ENCODE measurements at regions of chrX and their contacts with region 1.

Region 1: DNA sequence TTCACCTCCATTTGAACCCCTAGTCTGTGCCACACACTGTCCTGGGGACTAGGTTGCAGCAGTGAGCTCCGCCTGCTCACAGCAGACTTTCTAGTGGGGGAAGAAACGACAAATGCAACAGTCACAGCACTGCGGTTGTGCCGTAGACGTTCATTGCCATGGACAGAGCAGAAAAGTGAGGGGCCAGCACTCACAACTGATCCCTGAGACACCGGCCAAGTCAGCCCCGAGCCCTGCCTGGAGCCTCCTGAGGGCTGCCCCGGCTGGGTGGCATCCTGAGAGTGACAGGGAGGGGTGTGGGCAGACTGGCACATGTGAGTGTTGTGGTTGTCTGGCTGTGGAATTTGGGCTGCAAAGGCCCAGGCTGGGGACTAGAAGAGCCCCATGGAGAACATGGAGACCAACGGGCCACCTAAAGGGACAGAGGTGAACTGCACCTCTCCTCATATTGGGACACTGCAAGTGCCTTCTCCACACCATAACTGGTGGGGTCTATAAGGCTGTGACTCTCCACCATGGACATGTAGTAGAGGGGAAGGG is 4.6 kb downstream of the DUSP9 start:
- DNase-seq: peak in 1 of 4 donors; percentile 11
- ATAC-seq: no peak
- H3K4me3 ChIP-seq: no peak overlapping the region
- H3K27ac ChIP-seq: no peak overlapping the region
- H3K4me1 ChIP-seq: peaks cover 7% of the 10 kb centered on the region
- H3K27me3 ChIP-seq: peaks cover 0 to 3% of the 10 kb centered on the region in 2 donors
- CTCF ChIP-seq: peak in 1 of 7 experiments; percentile 15
- POLR2A ChIP-seq: no peak

Region 2: GRCh38 chrX:153319295-153320046 is 332.1 kb before region 1 on chrX:
- intact Hi-C with region 1: no loop called
- DNase-seq: no peak
- ATAC-seq: no peak
- H3K4me3 ChIP-seq: no peak overlapping the region
- H3K27ac ChIP-seq: no peak overlapping the region
- H3K4me1 ChIP-seq: no peaks in the 10 kb centered on the region
- H3K27me3 ChIP-seq: no peaks in the 10 kb centered on the region
- CTCF ChIP-seq: no peak
- POLR2A ChIP-seq: no peak

Region 3: GRCh38 chrX:153554519-153555167 is 97.0 kb before region 1 on chrX:
- intact Hi-C with region 1: loop called (anchors 10 kb)
- DNase-seq: peak; percentile 65 to 73 (median 67)
- ATAC-seq: peak; percentile 75
- H3K4me3 ChIP-seq: no peak overlapping the region
- H3K27ac ChIP-seq: no peak overlapping the region
- H3K4me1 ChIP-seq: no peaks in the 10 kb centered on the region
- H3K27me3 ChIP-seq: no peaks in the 10 kb centered on the region
- CTCF ChIP-seq: peak; percentile 45 to 71 (median 59)
- POLR2A ChIP-seq: no peak

Region 4: GRCh38 chrX:153599192-153600031 is 52.2 kb before region 1 on chrX:
- intact Hi-C with region 1: no loop called
- DNase-seq: peak; percentile 90 to 94 (median 92)
- ATAC-seq: peak; percentile 98
- H3K4me3 ChIP-seq: peak overlapping the region in 1 of 2 donors; percentile 39
- H3K27ac ChIP-seq: peak overlapping the region in 3 of 4 donors; percentile 50 to 79 (median 75)
- H3K4me1 ChIP-seq: peaks cover 23% of the 10 kb centered on the region
- H3K27me3 ChIP-seq: no peaks in the 10 kb centered on the region
- CTCF ChIP-seq: peak in 1 of 7 experiments; percentile 14
- POLR2A ChIP-seq: peak in 2 of 3 donors; percentile 28 to 40

Region 5: DNA sequence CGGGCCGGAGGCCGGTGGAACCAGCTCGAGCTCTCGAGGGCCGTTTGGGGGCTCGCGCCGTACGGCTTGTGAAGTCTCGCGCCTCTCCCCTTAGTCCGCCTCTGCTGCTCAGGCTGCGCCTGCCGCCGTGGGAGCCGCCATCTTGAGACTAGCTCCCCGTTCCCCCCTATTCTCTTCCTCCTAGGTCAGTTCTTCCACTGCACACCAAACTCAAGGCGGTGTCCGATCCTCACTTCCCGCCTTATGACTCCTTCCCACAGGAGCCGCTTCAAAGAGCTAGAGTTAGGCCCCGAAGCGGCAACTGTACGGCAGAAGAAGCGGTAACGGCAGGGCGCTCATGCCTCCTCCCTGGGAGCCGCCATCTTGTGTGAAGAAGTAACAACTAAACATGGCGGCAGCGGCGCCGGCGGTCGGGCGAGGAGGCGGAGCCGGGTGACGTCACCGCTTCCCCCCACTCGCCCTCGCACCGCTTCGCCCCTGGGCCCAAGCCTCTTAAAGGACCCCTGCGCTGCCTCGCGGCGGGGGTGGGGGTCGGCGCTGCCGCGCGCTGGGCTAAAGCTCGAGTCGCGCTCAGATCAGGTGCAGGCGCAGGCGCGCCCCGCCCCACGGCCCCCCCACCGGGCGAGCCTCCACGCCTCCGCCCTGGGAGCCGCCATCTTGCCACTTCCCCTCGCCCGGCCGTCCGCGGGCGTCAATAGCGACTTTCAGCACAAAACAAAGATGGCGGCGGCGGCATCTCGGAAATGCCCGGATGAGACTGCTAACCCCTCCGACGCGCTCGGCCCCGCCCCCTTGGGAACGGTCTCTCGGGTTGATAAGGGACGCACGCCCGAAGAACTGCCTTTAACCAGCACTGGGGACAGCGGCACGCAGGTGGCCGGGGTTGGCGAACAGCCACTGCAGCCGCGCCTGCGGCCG is 320.1 kb after region 1 on chrX and contains the start of gene HCFC1:
- intact Hi-C with region 1: no loop called
- DNase-seq: peak; percentile 89 to 94 (median 92)
- ATAC-seq: peak; percentile 69
- H3K4me3 ChIP-seq: peak within 1 kb of the TSS; percentile 80 to 95
- H3K27ac ChIP-seq: peak within 1 kb of the TSS; percentile 94 to 99 (median 96)
- H3K4me1 ChIP-seq: peaks cover 45% of the 10 kb centered on the region
- H3K27me3 ChIP-seq: no peaks in the 10 kb centered on the region
- CTCF ChIP-seq: peak in 1 of 7 experiments; percentile 2
- POLR2A ChIP-seq: peak; percentile 33 to 79 (median 73)
- total RNA-seq, gene HCFC1: 16.6 to 62.6 TPM

Region 6: GRCh38 chrX:153984351-153985178 is 333.0 kb after region 1 on chrX:
- intact Hi-C with region 1: no loop called
- DNase-seq: peak in 3 of 4 donors; percentile 39 to 53 (median 50)
- ATAC-seq: no peak
- H3K4me3 ChIP-seq: no peak overlapping the region
- H3K27ac ChIP-seq: peak overlapping the region; percentile 46 to 83 (median 72)
- H3K4me1 ChIP-seq: peaks cover 35% of the 10 kb centered on the region
- H3K27me3 ChIP-seq: no peaks in the 10 kb centered on the region
- CTCF ChIP-seq: no peak
- POLR2A ChIP-seq: no peak